ENCODE measurements at regions of chr14 and their contacts with region 1.

Region 1: DNA sequence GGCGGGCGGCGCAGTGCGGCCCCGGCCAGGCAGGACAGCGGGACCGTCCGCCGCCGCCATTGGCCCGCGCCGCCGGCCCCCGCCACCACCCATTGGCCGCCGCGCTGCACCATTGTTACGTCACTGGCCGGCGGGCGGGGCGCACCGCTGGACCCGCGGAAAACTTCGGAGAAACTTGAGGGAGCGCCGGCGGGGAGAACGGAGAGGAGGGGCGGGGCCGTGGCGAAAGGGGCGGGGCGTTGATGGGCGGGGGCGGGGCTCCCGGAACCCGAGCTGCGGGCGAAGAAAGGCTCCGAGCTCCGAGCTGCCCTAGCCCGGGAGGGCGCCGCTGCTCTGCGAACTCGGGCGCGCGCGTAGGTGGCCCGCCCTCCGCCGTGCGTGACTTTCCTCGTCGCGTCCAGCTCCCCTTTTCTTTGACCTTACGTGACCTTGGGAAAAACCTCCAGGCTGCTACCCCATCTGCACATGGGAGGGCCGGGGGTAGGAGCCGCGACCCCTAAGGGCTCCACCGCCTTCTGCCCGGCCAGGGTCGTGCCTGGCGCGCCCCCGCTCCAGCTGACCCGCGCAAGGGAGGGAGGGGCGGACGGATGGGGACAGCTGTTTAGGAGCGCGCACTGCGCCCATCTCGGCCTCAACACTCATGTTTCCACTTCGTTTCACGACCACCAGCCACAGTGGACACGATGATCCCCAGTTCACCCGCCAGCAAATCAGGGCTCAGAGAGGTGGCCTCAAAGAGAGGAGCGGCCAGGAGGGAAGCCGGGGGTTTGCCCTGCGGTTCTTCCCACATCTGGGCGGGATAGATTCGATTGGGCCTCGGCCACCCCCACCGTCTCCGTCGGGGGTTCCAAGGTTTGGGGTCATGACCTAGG is at the start of gene ANKRD9:
- DNase-seq: peak; percentile 99
- total RNA-seq, gene ANKRD9: 14.0 TPM

Region 2: GRCh38 chr14:102362545-102363181 is 147.3 kb before region 1 on chr14 and contains the starts of genes CINP and TECPR2:
- intact Hi-C with region 1: loop called in 1 of 2 experiments (anchors 10 kb)
- DNase-seq: peak; percentile 99
- total RNA-seq, gene CINP: 27.4 to 30.7 TPM
- total RNA-seq, gene TECPR2: 34.3 to 45.5 TPM

Region 3: GRCh38 chr14:102437997-102438915 is 71.7 kb before region 1 on chr14:
- intact Hi-C with region 1: loop called in 1 of 2 experiments (anchors 5 kb)
- DNase-seq: peak; percentile 96

Region 4: GRCh38 chr14:102445066-102445465 is 64.9 kb before region 1 on chr14:
- intact Hi-C with region 1: loop called in 1 of 2 experiments (anchors 1 kb)
- DNase-seq: no peak

Region 5: GRCh38 chr14:102479777-102480176 is 30.2 kb before region 1 on chr14:
- intact Hi-C with region 1: no loop called
- DNase-seq: peak; percentile 69